ENCODE measurements at regions of chr6 and their contacts with region 1.

Region 1: GRCh38 chr6:129140526-129140925 is 257.6 kb downstream of the LAMA2 start:
- ATAC-seq: peak in 1 of 8 experiments; percentile 27
- H3K4me3 ChIP-seq: no peak overlapping the region
- H3K27ac ChIP-seq: no peak overlapping the region
- H3K4me1 ChIP-seq: peaks cover 0 to 6% of the 10 kb centered on the region in 2 donors

Region 2: GRCh38 chr6:129203190-129203900 is 62.8 kb after region 1 on chr6:
- in situ Hi-C with region 1: loop called in 1 of 9 experiments (anchors 10 kb)
- ATAC-seq: no peak
- H3K4me3 ChIP-seq: no peak overlapping the region
- H3K27ac ChIP-seq: no peak overlapping the region
- H3K4me1 ChIP-seq: peaks cover 3 to 6% of the 10 kb centered on the region in 2 donors

Region 3: GRCh38 chr6:129353067-129353466 is 212.5 kb after region 1 on chr6:
- in situ Hi-C with region 1: no loop called
- ATAC-seq: no peak
- H3K4me3 ChIP-seq: no peak overlapping the region
- H3K27ac ChIP-seq: no peak overlapping the region
- H3K4me1 ChIP-seq: no peaks in the 10 kb centered on the region

Measured in motor neuron (in vitro differentiated cells).